ENCODE measurements at regions of chr7 and their contacts with region 1.

Region 1: GRCh38 chr7:105336009-105336408 is 52.7 kb downstream of the SRPK2 start:
- DNase-seq: no peak
- H3K4me3 Mint-ChIP-seq: no peak overlapping the region
- H3K27ac Mint-ChIP-seq: no peak overlapping the region
- H3K4me1 Mint-ChIP-seq: peaks cover 16% of the 10 kb centered on the region
- H3K27me3 Mint-ChIP-seq: no peaks in the 10 kb centered on the region
- CTCF ChIP-seq: peak; percentile 30

Region 2: DNA sequence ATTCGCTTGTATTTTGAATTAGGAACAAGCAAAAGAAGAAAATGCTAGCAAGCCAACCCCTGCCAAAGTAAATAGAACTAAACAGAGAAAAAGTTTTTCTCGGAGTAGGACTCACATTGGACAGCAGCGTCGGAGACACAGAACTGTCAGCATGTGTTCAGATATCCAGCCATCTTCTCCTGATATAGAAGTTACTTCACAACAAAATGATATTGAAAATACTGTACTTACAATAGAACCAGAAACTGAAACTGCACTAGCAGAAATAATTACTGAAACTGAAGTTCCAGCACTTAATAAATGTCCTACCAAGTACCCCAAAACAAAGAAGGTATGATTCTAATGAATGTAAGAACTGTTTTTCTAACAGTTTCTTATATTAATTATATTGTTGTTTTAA is 234.1 kb before region 1 on chr7:
- CTCF ChIA-PET with region 1: interaction called, 3 read pairs
- POLR2A ChIA-PET with region 1: interaction called, 3 read pairs
- intact Hi-C with region 1: loop called (anchors 10 kb)
- DNase-seq: no peak
- H3K4me3 Mint-ChIP-seq: no peak overlapping the region
- H3K27ac Mint-ChIP-seq: no peak overlapping the region
- H3K4me1 Mint-ChIP-seq: peaks cover 7% of the 10 kb centered on the region
- H3K27me3 Mint-ChIP-seq: no peaks in the 10 kb centered on the region
- CTCF ChIP-seq: no peak

Region 3: DNA sequence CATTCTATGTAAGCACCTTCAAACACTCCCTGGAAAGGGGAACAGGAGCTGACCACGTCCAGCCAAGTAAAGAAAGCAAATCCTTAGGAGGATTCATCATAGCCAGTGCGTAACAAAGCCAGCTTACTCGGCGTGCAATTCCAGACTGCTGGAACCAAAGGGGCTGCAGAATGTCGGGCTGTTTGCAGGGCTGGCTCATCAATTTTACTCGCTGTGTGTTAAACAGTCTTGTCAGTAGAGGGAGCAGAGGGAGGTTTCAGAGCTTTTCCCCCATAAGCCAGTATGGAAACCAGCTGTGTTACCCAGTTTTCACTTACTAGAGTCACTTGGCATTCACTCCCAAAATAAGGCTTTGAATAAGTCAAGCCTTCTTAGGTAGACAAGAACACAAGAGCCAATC is 194.9 kb before region 1 on chr7:
- CTCF ChIA-PET with region 1: interaction called, 6 read pairs
- POLR2A ChIA-PET with region 1: no interaction called
- intact Hi-C with region 1: loop called (anchors 1 kb)
- DNase-seq: peak; percentile 18
- H3K4me3 Mint-ChIP-seq: no peak overlapping the region
- H3K27ac Mint-ChIP-seq: peak overlapping the region; percentile 27
- H3K4me1 Mint-ChIP-seq: no peaks in the 10 kb centered on the region
- H3K27me3 Mint-ChIP-seq: no peaks in the 10 kb centered on the region
- CTCF ChIP-seq: peak; percentile 28